Caco-2 (cell line): ENCODE measurements at regions of chr3 and their contacts with region 1.

Region 1: GRCh38 chr3:37967260-37967881 is 23.2 kb upstream of the VILL start:
- DNase-seq: peak; percentile 77 to 82
- H3K4me3 ChIP-seq: no peak overlapping the region
- H3K4me3 Mint-ChIP-seq: no peak overlapping the region
- H3K27ac Mint-ChIP-seq: no peak overlapping the region
- H3K4me1 ChIP-seq: peaks cover 41% of the 10 kb centered on the region
- H3K4me1 Mint-ChIP-seq: peaks cover 33% of the 10 kb centered on the region
- H3K27me3 ChIP-seq: no peaks in the 10 kb centered on the region
- H3K27me3 Mint-ChIP-seq: no peaks in the 10 kb centered on the region
- CTCF ChIP-seq: peak; percentile 79 to 93

Region 2: GRCh38 chr3:37855363-37855970 is 111.9 kb before region 1 on chr3:
- CTCF ChIA-PET with region 1: interaction called, 64 read pairs
- POLR2A ChIA-PET with region 1: no interaction called
- intact Hi-C with region 1: loop called (anchors 1 kb)
- DNase-seq: peak; percentile 76 to 89
- H3K4me3 ChIP-seq: no peak overlapping the region
- H3K4me3 Mint-ChIP-seq: no peak overlapping the region
- H3K27ac Mint-ChIP-seq: no peak overlapping the region
- H3K4me1 ChIP-seq: peaks cover 7% of the 10 kb centered on the region
- H3K4me1 Mint-ChIP-seq: no peaks in the 10 kb centered on the region
- H3K27me3 ChIP-seq: no peaks in the 10 kb centered on the region
- H3K27me3 Mint-ChIP-seq: no peaks in the 10 kb centered on the region
- CTCF ChIP-seq: peak; percentile 87 to 91

Region 3: GRCh38 chr3:37912052-37912733 is 55.2 kb before region 1 on chr3:
- CTCF ChIA-PET with region 1: interaction called, 3 read pairs
- POLR2A ChIA-PET with region 1: no interaction called
- intact Hi-C with region 1: loop called (anchors 5 kb)
- DNase-seq: no peak
- H3K4me3 ChIP-seq: no peak overlapping the region
- H3K4me3 Mint-ChIP-seq: no peak overlapping the region
- H3K27ac Mint-ChIP-seq: no peak overlapping the region
- H3K4me1 ChIP-seq: no peaks in the 10 kb centered on the region
- H3K4me1 Mint-ChIP-seq: no peaks in the 10 kb centered on the region
- H3K27me3 ChIP-seq: no peaks in the 10 kb centered on the region
- H3K27me3 Mint-ChIP-seq: no peaks in the 10 kb centered on the region
- CTCF ChIP-seq: peak in 1 of 2 experiments; percentile 15

Region 4: DNA sequence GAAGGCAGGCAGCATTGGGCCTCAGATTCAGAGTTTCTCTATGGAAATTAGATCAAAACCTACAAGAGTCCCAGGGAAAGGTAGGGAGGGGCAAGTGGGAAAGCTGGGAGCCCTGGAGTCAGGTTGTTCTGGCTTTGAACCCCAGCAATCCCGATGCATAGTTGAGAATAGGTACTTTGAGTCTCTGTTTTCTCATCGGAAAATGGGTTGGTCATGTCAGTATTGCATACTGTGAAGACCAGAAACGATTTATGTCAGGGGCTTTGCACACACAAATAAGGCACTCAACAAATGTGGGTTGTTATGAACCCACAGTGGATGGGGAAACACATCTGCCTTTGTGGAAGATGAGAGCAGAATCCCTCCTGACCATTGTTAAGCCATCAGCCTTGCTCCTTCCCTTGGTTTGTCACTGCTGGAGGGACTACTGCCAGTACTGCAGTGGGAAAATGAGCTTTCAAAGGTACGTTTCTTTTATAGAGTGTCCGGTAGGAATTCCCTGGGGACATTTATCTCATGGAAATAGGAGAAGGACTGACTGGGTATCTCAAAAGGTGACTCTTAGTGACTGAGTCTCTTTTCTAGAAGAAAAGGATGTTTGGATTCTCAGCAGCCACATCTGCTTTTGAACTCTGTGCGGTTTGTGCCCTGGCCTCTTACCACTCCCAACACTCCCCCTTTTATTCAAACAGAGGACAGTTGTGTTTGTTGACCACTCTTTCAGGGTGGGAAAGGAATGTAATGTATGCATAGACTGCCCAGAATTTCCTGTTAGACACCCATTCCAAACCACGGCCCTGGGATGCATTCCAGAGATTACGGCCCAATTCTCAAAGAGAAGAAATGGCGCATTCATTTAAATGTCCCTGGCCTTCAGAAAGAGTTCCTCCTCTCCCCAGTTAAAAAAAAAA is 31.4 kb before region 1 on chr3:
- CTCF ChIA-PET with region 1: interaction called, 10 read pairs
- POLR2A ChIA-PET with region 1: interaction called, 5 read pairs
- intact Hi-C with region 1: loop called (anchors 1 kb)
- DNase-seq: peak; percentile 77 to 84
- H3K4me3 ChIP-seq: no peak overlapping the region
- H3K4me3 Mint-ChIP-seq: peak overlapping the region; percentile 28
- H3K27ac Mint-ChIP-seq: peak overlapping the region; percentile 91
- H3K4me1 ChIP-seq: peaks cover 45% of the 10 kb centered on the region
- H3K4me1 Mint-ChIP-seq: peaks cover 41% of the 10 kb centered on the region
- H3K27me3 ChIP-seq: no peaks in the 10 kb centered on the region
- H3K27me3 Mint-ChIP-seq: no peaks in the 10 kb centered on the region
- CTCF ChIP-seq: no peak

Region 5: DNA sequence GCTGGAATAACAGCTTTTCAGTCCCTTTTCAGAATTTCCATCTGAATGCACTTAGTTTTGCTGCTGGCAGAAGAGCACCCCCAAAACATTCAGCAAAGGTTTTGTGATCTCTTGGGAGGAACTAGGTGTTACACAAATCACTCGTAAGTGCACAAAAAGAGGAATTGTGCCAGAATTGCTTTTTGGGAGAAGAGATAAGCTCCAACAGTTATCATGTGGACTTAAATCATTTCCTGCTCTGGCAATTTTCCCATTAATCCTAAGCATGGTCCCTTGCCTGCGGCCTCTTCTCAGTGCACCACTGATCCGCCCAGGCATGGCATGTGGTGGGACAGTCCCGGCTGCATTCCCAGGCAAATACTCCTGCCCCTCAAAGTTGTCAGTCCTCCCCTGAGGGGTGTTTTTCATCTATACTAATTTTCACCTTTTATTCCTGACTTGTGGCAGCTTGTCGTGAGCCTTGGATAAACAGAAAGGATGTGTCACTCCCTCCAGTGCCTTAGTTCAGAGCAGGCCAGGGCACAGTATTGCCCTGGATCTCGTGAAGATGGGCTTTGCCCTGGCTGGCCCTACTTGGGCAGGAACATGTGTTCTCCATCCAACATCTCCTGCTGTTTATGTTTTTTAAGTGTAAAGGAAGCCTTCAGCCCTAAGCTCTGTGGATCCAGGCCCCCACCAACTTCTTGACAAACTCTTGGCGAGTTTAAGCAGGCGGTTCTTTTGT is 21.4 kb before region 1 on chr3:
- CTCF ChIA-PET with region 1: no interaction called
- POLR2A ChIA-PET with region 1: interaction called, 3 read pairs
- intact Hi-C with region 1: loop called (anchors 1 kb)
- DNase-seq: peak; percentile 86 to 89
- H3K4me3 ChIP-seq: no peak overlapping the region
- H3K4me3 Mint-ChIP-seq: peak overlapping the region; percentile 47
- H3K27ac Mint-ChIP-seq: peak overlapping the region; percentile 69
- H3K4me1 ChIP-seq: peaks cover 39% of the 10 kb centered on the region
- H3K4me1 Mint-ChIP-seq: peaks cover 53% of the 10 kb centered on the region
- H3K27me3 ChIP-seq: no peaks in the 10 kb centered on the region
- H3K27me3 Mint-ChIP-seq: no peaks in the 10 kb centered on the region
- CTCF ChIP-seq: no peak

Region 6: GRCh38 chr3:37996785-37997301 is 29.5 kb after region 1 on chr3:
- CTCF ChIA-PET with region 1: interaction called, 11 read pairs
- POLR2A ChIA-PET with region 1: interaction called, 5 read pairs
- intact Hi-C with region 1: no loop called
- DNase-seq: peak; percentile 87
- H3K4me3 ChIP-seq: no peak overlapping the region
- H3K4me3 Mint-ChIP-seq: peak overlapping the region; percentile 25
- H3K27ac Mint-ChIP-seq: peak overlapping the region; percentile 48
- H3K4me1 ChIP-seq: peaks cover 67% of the 10 kb centered on the region
- H3K4me1 Mint-ChIP-seq: peaks cover 54% of the 10 kb centered on the region
- H3K27me3 ChIP-seq: no peaks in the 10 kb centered on the region
- H3K27me3 Mint-ChIP-seq: no peaks in the 10 kb centered on the region
- CTCF ChIP-seq: peak; percentile 81 to 83

Region 7: DNA sequence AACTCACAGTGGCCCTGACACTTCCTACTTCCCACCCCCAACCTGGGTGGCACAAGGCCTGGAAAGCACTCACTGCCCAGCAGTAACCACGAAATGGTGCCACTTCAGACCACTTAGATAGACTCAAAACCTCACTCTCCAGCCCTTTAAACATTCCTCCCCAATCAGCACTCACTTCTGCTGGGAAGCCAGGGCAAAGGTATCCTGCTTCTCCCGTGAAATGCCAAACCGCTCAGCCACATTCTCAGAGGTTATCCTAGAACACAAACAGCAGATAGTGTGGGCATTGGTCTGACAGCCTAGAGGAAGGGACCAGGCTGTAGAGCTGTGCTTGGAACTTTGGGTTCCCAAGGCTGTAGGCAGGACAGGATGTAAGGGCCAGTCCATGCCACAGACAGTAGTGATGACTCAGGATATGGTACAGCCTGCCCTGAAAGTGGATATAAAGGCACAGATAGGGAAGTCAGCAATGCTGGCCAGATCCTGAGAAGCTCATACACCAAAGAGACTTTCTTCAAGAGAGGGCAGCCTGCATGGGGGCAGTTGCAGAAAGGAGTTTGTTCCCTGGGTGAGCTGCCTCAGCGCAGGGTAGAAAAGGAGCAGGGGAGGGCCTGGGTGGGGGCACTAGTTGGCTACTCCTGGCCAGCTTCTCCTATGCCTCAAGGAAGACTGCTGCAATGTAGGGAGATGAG is 160.4 kb after region 1 on chr3:
- CTCF ChIA-PET with region 1: no interaction called
- POLR2A ChIA-PET with region 1: no interaction called
- intact Hi-C with region 1: no loop called
- DNase-seq: no peak
- H3K4me3 ChIP-seq: no peak overlapping the region
- H3K4me3 Mint-ChIP-seq: no peak overlapping the region
- H3K27ac Mint-ChIP-seq: no peak overlapping the region
- H3K4me1 ChIP-seq: peaks cover 70% of the 10 kb centered on the region
- H3K4me1 Mint-ChIP-seq: peaks cover 18% of the 10 kb centered on the region
- H3K27me3 ChIP-seq: no peaks in the 10 kb centered on the region
- H3K27me3 Mint-ChIP-seq: no peaks in the 10 kb centered on the region
- CTCF ChIP-seq: no peak

Region 8: DNA sequence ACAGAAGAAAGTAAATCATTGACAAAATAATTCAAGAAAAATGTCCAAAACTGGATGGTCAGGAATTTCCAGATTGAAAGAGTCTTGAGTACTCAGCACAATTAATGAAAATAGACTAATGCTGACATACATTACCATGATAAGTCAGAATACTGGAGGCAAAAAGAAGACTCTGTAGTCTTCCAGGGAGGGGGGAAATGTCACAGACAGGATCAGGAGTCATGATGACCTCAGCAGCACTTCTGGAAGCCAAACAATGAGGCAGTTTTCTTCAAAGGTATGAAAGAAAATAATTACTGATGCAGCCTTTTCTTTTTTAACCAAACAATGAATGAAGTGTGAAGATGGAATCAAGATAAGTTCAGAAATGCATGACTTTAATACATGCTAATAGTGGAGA is 268.1 kb after region 1 on chr3:
- CTCF ChIA-PET with region 1: no interaction called
- POLR2A ChIA-PET with region 1: no interaction called
- intact Hi-C with region 1: no loop called
- DNase-seq: peak in 1 of 2 experiments; percentile 24
- H3K4me3 ChIP-seq: no peak overlapping the region
- H3K4me3 Mint-ChIP-seq: peak overlapping the region; percentile 3
- H3K27ac Mint-ChIP-seq: no peak overlapping the region
- H3K4me1 ChIP-seq: peaks cover 23% of the 10 kb centered on the region
- H3K4me1 Mint-ChIP-seq: peaks cover 14% of the 10 kb centered on the region
- H3K27me3 ChIP-seq: no peaks in the 10 kb centered on the region
- H3K27me3 Mint-ChIP-seq: no peaks in the 10 kb centered on the region
- CTCF ChIP-seq: no peak

Region 9: DNA sequence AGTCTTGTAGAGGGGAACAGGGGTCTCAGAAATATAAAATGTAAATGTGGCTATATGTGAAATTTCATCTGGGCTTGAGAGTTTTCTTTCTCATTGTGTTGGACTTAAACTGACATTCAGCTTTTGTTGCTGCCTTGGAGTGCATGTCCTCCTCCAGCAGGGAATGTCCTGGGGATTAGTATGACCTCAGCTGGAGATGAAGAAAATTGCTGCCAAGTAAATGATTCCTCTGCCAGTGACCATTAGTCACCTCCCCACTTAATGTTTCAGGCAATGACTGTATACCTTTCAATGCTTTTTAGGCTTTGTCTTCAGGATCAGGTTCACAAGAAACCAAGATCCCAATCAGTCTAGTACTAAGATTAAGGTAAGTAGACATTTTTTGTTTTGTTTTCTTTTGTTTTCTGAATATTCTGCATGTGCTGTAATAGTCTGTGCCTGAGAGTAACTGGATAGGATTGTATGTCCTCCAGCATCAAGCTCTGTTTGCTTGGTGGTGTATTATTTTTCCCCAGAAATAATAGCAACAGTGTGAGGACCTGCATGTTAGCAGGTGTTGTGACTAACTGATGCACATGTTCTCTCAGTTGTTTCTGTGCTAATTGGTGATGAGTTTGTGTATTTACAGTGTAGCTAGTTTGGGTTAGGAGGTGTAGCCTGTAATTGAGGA is 280.1 kb after region 1 on chr3:
- CTCF ChIA-PET with region 1: no interaction called
- POLR2A ChIA-PET with region 1: no interaction called
- intact Hi-C with region 1: no loop called
- DNase-seq: peak in 1 of 2 experiments; percentile 16
- H3K4me3 ChIP-seq: no peak overlapping the region
- H3K4me3 Mint-ChIP-seq: no peak overlapping the region
- H3K27ac Mint-ChIP-seq: no peak overlapping the region
- H3K4me1 ChIP-seq: no peaks in the 10 kb centered on the region
- H3K4me1 Mint-ChIP-seq: no peaks in the 10 kb centered on the region
- H3K27me3 ChIP-seq: no peaks in the 10 kb centered on the region
- H3K27me3 Mint-ChIP-seq: no peaks in the 10 kb centered on the region
- CTCF ChIP-seq: peak in 1 of 2 experiments; percentile 18